ENCODE measurements at regions of chr3 and their contacts with region 1.

Region 1: DNA sequence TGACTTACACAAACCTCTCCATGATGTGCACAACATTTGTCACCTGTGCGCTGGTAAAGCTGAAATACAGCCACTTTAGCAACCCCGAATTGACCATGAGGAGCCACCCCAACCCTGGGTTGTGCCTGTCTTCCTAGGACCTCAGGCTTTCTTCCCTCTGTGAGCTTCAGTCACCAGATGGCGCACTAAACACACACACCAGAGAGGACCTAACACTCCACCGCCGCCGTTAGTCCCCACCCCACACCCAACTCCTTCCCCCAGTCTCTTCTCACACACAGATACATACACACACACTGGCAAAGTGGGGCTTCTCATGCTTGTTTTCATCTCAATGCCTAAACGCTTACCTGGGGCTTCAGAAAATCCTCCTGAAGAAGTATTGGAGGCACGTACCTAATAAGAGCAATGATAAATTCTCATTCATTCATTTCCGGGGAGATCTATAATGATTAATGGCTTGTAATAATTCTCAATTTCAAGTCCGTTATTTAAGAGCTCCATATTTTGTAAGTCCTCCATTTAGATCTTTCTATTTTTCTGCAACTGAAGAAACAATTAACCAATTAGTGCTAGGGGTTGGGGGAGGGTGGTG is 2.1 kb upstream of the CCDC80 start:
- DNase-seq: peak; percentile 81 to 90 (median 84)
- ATAC-seq: peak; percentile 90
- H3K4me3 ChIP-seq: no peak overlapping the region
- H3K27ac ChIP-seq: no peak overlapping the region
- H3K4me1 ChIP-seq: peaks cover 12 to 46% of the 10 kb centered on the region in 2 donors
- H3K27me3 ChIP-seq: no peaks in the 10 kb centered on the region
- CTCF ChIP-seq: peak; percentile 73 to 81

Region 2: GRCh38 chr3:112531358-112531781 is 111.6 kb before region 1 on chr3:
- intact Hi-C with region 1: no loop called
- DNase-seq: peak in 2 of 4 donors; percentile 19 to 26
- ATAC-seq: peak; percentile 37
- H3K4me3 ChIP-seq: no peak overlapping the region
- H3K27ac ChIP-seq: no peak overlapping the region
- H3K4me1 ChIP-seq: no peaks in the 10 kb centered on the region
- H3K27me3 ChIP-seq: no peaks in the 10 kb centered on the region
- CTCF ChIP-seq: peak; percentile 47 to 50

Region 3: GRCh38 chr3:112814266-112814665 is 171.3 kb after region 1 on chr3:
- intact Hi-C with region 1: loop called in 1 of 2 experiments (anchors 10 kb)
- DNase-seq: peak in 2 of 4 donors; percentile 28 to 53
- ATAC-seq: peak; percentile 72
- H3K4me3 ChIP-seq: no peak overlapping the region
- H3K27ac ChIP-seq: peak overlapping the region; percentile 45 to 73
- H3K4me1 ChIP-seq: peaks cover 0 to 28% of the 10 kb centered on the region in 2 donors
- H3K27me3 ChIP-seq: no peaks in the 10 kb centered on the region
- CTCF ChIP-seq: no peak